Vagina (tissue), 2 donors: ENCODE measurements at regions of chr5 and their contacts with region 1.

Region 1: DNA sequence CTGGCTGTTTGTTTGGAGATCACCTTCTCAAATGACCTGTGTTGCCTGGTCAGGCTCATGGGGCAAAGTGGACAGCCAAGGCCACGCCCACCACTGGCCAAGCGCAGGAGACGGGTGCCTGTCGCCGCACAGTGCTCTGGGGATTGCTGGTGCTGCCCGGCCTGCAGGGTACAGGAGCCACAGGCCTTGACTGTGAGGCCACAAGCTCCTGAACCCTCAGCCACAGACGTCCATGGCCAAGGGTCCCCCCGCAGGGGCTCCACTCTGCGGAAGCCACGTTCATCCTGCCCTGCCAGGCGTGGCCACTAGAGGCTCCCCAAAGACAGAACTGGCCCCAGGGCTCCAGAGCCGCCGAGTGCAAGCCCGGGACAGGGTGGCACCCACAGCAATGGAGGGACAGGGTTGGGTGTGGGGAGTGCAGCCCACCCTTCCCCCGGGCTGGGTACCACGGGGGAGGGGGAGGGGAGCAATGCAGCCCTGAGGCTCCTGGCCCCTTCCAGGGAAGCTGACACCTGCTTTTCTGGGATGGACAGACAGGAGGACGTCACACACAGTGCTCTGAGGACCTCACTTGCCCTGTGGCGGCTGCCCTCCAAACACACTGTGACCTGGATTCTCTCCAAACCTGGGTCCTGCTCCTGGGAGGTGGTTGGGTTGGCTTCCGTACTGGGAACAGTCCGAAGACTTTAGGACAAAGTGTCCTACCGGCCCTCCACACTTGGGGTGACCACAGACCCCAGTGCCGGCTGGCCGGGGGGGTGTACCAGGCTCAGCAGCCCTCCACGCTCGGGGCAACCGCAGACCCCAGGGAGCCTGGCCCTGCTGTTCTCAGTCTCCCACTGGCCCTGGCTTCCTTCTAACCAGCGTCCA is 21.5 kb downstream of the TPPP start:
- DNase-seq: no peak
- H3K4me3 ChIP-seq: peak overlapping the region in 1 of 2 donors; percentile 28
- H3K27ac ChIP-seq: no peak overlapping the region
- H3K4me1 ChIP-seq: peaks cover 39% of the 10 kb centered on the region
- H3K27me3 ChIP-seq: no peaks in the 10 kb centered on the region
- CTCF ChIP-seq: peak; percentile 77 to 81 (median 78)
- POLR2A ChIP-seq: no peak

Region 2: DNA sequence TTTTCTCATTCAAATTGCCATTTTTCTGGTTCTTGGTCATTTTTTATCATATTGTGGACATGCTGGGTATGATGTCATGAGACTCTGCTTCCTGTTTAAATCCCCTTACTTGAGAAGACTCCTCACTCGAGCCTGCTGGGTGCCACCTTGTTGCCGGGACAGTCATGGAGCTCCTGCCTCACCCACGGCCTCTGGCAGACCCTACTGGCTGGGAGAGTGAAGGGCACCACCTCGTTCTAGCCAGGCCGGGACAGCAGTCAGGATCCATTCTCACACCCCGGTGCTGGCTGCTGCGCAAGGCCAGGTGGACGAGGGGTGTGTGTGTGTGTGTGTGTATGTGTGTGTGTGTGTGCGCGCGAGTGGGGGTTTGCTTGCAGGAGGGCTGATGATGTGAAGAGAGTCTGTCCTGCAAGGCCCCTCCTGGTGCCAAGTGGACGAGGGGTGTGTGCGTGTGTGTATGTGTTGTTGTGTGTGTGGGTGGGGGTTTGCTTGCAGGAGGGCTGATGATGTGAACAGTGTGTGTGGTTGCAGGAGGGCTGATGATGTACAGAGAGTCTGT is 55.1 kb before region 1 on chr5:
- intact Hi-C with region 1: no loop called
- DNase-seq: no peak
- H3K4me3 ChIP-seq: no peak overlapping the region
- H3K27ac ChIP-seq: no peak overlapping the region
- H3K4me1 ChIP-seq: peaks cover 3% of the 10 kb centered on the region
- H3K27me3 ChIP-seq: no peaks in the 10 kb centered on the region
- CTCF ChIP-seq: no peak
- POLR2A ChIP-seq: no peak

Region 3: DNA sequence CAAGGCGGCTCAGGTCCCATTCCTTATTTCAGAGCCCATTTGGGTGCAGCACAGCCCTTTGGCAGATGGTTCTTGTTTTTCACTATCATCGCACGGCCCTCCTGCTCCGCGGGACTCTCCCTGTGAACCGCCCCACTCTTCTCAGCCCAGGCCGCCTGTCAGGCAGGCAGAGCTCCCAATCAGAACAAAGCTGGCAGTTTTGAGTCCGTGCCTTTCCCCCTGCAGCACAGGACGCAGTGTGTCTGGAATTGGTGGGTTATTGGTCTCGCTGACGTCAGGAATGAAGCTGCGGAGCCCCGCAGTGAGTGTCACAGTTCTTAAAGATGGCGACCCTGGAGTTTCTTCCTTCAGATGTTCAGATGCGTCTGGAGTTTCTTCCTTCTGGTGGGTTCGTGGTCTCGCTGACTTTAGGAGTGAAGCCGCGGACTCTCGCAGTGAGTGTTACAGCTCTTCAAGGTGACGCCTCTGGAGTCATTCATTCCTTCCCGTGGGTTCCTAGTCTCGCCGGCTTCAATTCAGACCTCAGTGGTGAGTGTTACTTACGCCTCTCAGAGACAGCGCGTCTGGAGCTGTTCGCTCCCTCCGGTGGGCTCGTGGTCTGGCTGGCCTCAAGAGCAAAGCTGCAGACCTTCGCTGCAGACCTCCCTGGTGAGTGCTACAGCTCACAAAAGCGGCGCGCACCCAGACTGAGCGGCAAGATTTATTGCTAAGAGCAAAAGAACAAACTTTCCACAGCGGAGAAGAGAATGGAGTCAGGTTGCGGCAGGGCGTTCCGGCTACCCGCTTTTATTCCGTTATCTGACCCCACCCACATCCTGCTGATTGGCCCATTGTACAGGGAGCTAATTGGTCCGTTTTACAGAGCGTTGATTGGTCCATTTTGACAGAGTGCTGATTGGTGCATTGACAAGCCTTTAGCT is 105.4 kb after region 1 on chr5:
- intact Hi-C with region 1: loop called (anchors 5 kb)
- DNase-seq: peak in 1 of 2 donors; percentile 97
- H3K4me3 ChIP-seq: peak overlapping the region in 1 of 2 donors; percentile 32
- H3K27ac ChIP-seq: no peak overlapping the region
- H3K4me1 ChIP-seq: no peaks in the 10 kb centered on the region
- H3K27me3 ChIP-seq: no peaks in the 10 kb centered on the region
- CTCF ChIP-seq: no peak
- POLR2A ChIP-seq: no peak

Region 4: GRCh38 chr5:902129-902916 is 230.6 kb after region 1 on chr5:
- intact Hi-C with region 1: loop called (anchors 5 kb)
- DNase-seq: no peak
- H3K4me3 ChIP-seq: no peak overlapping the region
- H3K27ac ChIP-seq: no peak overlapping the region
- H3K4me1 ChIP-seq: no peaks in the 10 kb centered on the region
- H3K27me3 ChIP-seq: no peaks in the 10 kb centered on the region
- CTCF ChIP-seq: no peak
- POLR2A ChIP-seq: no peak

Region 5: DNA sequence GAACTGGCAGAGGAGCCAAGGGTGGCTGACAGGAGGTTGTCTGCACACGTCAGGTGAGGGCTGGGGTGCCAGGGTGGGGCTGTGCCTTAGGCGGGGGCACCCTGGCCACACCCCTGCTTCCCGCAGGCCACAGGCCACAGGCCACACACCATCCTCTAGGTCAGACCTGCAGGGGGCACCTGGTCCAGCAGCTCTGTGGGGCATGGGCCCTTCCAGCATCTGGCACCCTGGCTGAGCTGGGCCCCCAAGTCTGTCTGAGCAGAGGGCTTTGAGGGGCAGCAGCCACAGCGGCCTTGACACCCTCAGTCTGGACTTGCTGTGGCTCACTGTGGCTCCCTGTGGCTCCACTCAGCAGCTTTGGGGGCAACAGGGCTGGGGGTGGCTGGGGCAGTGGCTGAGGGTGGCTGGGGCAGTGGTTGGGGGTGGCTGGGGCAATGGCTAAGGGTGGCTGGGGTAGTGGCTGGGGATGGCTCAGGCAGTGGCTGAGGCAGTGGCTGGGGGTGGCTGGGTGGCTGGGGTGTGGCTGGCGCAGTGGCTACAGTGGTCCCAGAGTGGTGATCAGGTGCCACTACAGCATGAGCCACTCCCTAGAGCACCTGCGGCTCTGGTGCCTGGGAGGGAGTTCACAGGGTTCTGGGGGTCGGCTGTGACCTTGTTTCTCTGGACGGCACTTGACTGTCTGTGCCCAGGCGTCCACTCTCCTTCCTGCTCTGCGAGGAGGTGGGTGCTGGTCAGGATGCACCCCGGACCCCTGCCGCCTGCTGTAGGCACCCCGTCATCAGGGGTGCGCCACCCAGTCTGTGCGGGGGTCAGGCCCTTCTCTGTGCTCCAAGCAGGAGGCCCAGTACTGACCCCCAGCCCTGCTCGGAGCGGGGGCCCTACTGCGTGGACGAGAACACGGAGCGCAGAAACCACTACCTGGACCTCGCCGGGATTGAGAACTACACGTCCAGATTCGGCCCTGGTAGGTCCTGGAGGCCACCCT is 364.0 kb after region 1 on chr5:
- intact Hi-C with region 1: no loop called
- DNase-seq: no peak
- H3K4me3 ChIP-seq: no peak overlapping the region
- H3K27ac ChIP-seq: no peak overlapping the region
- H3K4me1 ChIP-seq: no peaks in the 10 kb centered on the region
- H3K27me3 ChIP-seq: no peaks in the 10 kb centered on the region
- CTCF ChIP-seq: no peak
- POLR2A ChIP-seq: no peak

Region 6: DNA sequence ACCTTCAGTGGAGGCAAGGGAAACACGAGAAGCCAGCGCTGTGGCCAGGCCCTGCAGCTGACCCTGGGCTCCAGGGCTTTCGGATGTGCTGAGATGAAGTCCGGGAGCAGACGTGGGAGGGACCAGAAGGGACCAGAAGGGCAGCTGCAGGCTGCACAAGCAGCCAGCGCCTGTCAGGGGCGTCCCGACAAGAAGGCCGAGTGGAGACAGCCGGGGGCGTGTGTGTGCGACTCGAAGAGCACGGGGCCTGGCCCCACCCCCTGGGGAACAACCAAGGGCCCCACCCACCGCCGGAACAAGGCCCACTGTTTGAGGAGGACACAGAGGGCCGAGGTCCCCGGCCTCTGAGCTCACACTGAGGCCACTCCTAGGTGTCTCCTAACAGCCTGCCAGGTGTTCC is 408.7 kb after region 1 on chr5:
- intact Hi-C with region 1: no loop called
- DNase-seq: no peak
- H3K4me3 ChIP-seq: no peak overlapping the region
- H3K27ac ChIP-seq: no peak overlapping the region
- H3K4me1 ChIP-seq: no peaks in the 10 kb centered on the region
- H3K27me3 ChIP-seq: no peaks in the 10 kb centered on the region
- CTCF ChIP-seq: no peak
- POLR2A ChIP-seq: no peak